PC-9 (cell line): ENCODE measurements at regions of chr6 and their contacts with region 1.

Region 1: DNA sequence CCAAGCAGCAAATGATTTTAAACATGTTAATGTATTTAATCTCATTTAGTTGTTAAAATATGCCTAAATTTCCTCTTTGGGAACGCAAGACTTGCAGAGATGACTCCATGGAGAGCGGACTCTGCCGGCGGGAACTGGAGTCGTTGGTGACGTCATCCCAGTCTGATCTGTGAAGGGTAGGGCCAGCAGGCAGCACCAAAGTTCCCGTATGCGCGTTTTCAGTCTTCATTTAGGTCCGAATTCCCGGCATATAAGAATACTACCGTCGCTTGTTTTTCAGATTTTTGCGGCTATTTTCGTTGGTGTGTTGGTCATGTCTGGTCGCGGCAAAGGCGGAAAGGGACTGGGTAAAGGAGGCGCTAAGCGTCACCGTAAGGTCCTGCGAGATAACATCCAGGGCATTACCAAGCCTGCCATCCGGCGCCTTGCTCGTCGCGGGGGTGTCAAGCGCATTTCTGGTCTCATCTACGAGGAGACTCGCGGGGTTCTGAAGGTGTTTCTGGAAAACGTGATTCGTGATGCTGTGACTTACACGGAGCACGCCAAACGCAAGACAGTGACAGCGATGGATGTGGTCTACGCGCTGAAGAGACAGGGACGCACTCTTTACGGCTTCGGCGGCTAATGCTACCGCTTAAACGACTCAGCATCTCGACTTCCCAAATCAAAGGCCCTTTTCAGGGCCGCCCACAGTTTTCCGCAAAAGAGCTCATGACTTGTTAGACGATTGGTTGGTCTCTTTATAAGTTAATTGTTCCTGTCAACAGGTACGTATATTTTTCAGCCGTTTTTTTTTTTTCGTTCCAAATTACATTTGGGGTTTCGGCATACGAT is 117.3 kb downstream of the HFE start:
- DNase-seq: peak; percentile 91 to 94
- H3K4me3 ChIP-seq: peak overlapping the region; percentile 63
- H3K27ac ChIP-seq: peak overlapping the region; percentile 91
- H3K4me1 ChIP-seq: peaks cover 36% of the 10 kb centered on the region
- H3K27me3 ChIP-seq: no peaks in the 10 kb centered on the region
- CTCF ChIP-seq: 0 out of 2 replicates have a peak, but pooled peaks have one; percentile 20

Region 2: DNA sequence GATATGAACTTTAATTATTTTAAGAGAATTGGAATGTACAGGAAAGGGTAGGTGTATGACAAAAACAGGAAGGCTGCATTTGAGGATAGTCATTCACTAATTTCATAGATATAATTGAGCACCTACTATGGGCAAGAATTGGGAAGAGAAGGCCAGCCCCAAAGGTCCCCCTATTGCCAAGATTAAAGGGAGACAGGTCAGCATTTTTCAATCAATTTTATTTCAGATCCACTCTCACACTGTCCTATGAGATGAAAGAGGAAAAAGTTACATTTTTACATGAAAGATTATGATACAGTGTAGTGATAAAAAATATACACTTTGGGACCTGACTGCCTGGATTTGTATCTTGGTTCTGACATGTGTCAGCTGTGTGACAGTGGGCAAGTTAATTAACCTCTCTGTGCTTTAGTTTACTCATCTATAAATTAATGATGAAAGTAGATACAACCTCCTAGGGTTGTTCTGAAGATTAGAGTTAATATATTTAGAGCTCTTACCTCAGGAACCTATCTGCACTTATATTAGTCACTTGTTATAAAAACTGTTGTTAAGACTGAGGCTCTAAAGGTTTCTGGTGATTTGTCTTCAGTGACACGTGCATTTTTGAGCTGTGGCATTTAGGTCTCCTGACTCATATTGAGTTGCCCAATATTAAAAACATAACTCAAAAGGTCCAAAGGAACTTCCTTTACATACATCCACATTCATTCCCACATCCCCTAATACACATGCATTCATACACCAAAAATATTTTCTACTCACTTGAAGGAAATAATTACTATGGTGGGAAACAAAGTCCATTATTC is 506.8 kb before region 1 on chr6:
- CTCF ChIA-PET with region 1: no interaction called
- POLR2A ChIA-PET with region 1: no interaction called
- intact Hi-C with region 1: no loop called
- DNase-seq: peak in 1 of 2 experiments; percentile 45
- H3K4me3 ChIP-seq: no peak overlapping the region
- H3K27ac ChIP-seq: no peak overlapping the region
- H3K4me1 ChIP-seq: no peaks in the 10 kb centered on the region
- H3K27me3 ChIP-seq: no peaks in the 10 kb centered on the region
- CTCF ChIP-seq: no peak

Region 3: DNA sequence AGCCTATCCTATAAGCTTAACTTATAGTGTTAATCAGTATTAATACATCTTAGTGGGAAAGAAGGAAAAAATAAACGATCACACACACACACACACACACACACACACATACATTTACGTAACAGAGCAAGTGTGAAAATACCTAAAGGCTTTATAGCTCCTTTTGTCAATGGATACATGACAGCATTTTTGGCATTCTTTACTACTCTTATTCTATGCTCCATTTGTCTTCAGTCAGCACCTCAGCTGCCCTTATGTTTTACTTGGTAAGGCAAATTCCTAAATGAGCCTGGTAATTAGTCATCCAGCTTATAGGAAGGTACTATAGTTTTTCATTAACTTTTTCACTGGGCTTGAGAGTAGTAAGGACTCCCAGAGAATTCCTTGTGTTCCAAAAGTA is 305.4 kb before region 1 on chr6:
- CTCF ChIA-PET with region 1: no interaction called
- POLR2A ChIA-PET with region 1: interaction called, 12 read pairs
- intact Hi-C with region 1: no loop called
- DNase-seq: no peak
- H3K4me3 ChIP-seq: no peak overlapping the region
- H3K27ac ChIP-seq: no peak overlapping the region
- H3K4me1 ChIP-seq: no peaks in the 10 kb centered on the region
- H3K27me3 ChIP-seq: no peaks in the 10 kb centered on the region
- CTCF ChIP-seq: no peak

Region 4: DNA sequence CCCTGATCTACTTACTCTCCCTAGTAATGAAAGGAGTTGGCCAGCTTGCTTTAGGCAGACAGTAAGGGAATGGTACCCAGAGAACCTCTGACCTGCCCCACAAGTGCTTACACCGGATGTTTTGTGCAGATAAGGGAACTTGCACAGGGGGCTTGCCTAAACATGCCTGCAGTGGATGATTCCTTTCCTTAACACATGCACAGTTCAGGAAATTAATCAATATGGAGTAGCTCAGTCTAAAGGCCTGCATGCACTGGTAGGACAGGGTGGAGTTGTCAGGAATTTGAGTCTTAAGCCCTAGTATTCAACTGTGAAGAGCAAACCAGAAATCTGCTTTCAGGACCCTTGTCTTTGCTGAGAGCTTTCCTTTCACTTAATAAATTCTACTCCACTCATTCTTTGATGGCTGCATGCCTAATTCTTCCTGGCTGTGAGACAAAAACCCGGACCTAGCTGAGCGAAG is 245.8 kb before region 1 on chr6:
- CTCF ChIA-PET with region 1: no interaction called
- POLR2A ChIA-PET with region 1: no interaction called
- intact Hi-C with region 1: no loop called
- DNase-seq: no peak
- H3K4me3 ChIP-seq: no peak overlapping the region
- H3K27ac ChIP-seq: no peak overlapping the region
- H3K4me1 ChIP-seq: peaks cover 8% of the 10 kb centered on the region
- H3K27me3 ChIP-seq: no peaks in the 10 kb centered on the region
- CTCF ChIP-seq: no peak

Region 5: GRCh38 chr6:26183581-26184366 is 20.8 kb before region 1 on chr6:
- CTCF ChIA-PET with region 1: no interaction called
- POLR2A ChIA-PET with region 1: interaction called, 73 read pairs
- intact Hi-C with region 1: no loop called
- DNase-seq: peak; percentile 72 to 87
- H3K4me3 ChIP-seq: peak overlapping the region; percentile 54
- H3K27ac ChIP-seq: peak overlapping the region; percentile 65
- H3K4me1 ChIP-seq: peaks cover 12% of the 10 kb centered on the region; the same call in 1 of the 2 replicates
- H3K27me3 ChIP-seq: no peaks in the 10 kb centered on the region
- CTCF ChIP-seq: no peak

Region 6: GRCh38 chr6:26234421-26235296 is 30.1 kb after region 1 on chr6:
- CTCF ChIA-PET with region 1: no interaction called
- POLR2A ChIA-PET with region 1: interaction called, 15 read pairs
- intact Hi-C with region 1: no loop called
- DNase-seq: peak; percentile 61 to 66
- H3K4me3 ChIP-seq: peak overlapping the region; percentile 70
- H3K27ac ChIP-seq: peak overlapping the region; percentile 57
- H3K4me1 ChIP-seq: peaks cover 25% of the 10 kb centered on the region
- H3K27me3 ChIP-seq: no peaks in the 10 kb centered on the region
- CTCF ChIP-seq: no peak

Region 7: DNA sequence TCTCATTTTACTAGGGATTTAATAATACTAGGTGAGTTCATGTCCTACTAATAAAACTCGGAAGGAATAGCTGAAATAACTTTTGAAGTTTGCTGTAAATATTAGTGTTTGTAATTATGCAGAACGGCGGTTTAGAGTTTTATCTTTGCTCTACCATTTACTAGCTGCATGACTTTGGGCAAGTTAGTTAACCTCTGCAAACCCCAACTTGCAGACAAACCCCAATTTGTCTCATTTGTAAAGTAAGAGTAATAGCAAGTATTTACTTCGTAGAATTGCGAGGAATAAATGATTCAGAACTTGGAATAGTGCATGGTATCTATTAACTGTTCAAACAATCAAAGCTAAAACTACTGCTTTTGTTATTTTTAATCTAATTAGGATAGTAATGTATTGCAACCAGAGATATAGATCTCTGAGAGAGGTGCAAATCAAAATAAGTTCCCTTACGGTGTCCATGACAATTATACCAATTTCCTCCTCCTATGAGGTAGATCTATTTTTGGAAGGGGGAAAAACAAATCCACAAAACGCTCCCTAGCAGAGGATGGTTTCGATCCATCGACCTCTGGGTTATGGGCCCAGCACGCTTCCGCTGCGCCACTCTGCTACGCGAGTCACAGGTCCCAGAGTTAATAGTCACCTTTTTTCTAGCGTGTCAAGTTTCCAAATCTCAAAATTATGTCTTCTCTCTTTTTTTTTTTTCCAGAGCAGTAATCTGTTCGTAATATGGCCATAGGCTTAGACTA is 125.4 kb after region 1 on chr6:
- CTCF ChIA-PET with region 1: no interaction called
- POLR2A ChIA-PET with region 1: interaction called, 4 read pairs
- intact Hi-C with region 1: loop called (anchors 2 kb)
- DNase-seq: peak; percentile 69 to 71
- H3K4me3 ChIP-seq: peak overlapping the region; percentile 85
- H3K27ac ChIP-seq: peak overlapping the region; percentile 66
- H3K4me1 ChIP-seq: peaks cover 34% of the 10 kb centered on the region; the same call in 1 of the 2 replicates
- H3K27me3 ChIP-seq: no peaks in the 10 kb centered on the region
- CTCF ChIP-seq: no peak